Activated CD4-positive, alpha-beta T cell treated with anti-CD3 and anti-CD28 coated beads for 36 hours (primary cell): ENCODE measurements at regions of chr5 and their contacts with region 1.

Region 1: GRCh38 chr5:472656-473553 is 29.9 kb downstream of the EXOC3 start:
- DNase-seq: peak; percentile 93
- ATAC-seq: peak; percentile 80
- H3K4me3 Mint-ChIP-seq: peak overlapping the region; percentile 88
- H3K27ac Mint-ChIP-seq: peak overlapping the region; percentile 93
- H3K4me1 Mint-ChIP-seq: peaks cover 25% of the 10 kb centered on the region
- H3K27me3 Mint-ChIP-seq: peaks cover 4% of the 10 kb centered on the region

Region 2: DNA sequence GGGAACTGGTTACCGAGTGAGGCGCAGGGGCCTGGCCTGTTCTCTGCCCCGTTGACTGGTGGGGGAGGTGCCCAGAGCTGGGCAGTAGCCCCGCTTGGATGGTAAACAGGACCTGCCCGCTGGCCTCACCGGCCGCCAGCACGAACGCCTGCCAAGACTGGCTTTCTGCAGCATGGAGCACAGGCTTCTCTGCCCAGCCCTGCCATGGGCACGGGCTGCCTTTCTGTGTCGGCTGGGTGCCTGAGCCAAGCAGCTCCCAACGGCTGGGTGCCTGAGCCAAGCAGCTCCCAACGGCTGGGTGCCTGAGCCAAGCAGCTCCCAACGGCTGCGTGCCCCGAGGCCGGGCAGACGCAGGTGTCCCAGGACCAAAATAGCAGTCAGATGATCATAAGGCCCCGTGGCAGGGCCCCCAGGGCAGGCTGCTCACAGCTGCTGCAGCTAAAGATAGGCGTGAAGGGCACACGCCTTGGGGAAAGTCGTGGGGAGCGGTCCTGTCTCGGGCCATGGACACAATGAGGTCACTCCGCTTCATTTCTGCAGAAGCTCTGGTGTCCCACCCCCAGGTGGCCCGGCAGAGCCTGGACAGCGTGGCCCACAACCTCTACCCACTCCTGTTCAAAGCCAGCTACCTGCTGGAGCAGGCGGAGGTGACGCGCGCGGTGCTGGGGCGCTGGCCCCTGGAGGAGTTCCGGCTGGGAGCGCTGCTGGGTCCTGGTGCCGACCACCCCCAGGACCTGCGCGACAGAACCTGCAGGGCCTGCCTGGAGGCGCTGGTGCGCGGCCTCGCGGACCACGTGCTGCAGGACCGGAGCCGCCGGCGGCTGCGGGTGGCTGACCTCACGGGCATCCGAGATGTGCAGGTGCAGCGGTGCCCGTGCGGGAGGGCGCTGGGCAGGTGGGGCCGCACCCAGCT is 281.6 kb before region 1 on chr5 and contains the start of gene LRRC14B:
- CTCF ChIA-PET with region 1: no interaction called
- POLR2A ChIA-PET with region 1: no interaction called
- intact Hi-C with region 1: no loop called
- DNase-seq: peak; percentile 51
- ATAC-seq: peak; percentile 12
- H3K4me3 Mint-ChIP-seq: no peak within 1 kb of the TSS
- H3K27ac Mint-ChIP-seq: no peak within 1 kb of the TSS
- H3K4me1 Mint-ChIP-seq: peaks cover 14% of the 10 kb centered on the region
- H3K27me3 Mint-ChIP-seq: peaks cover 3% of the 10 kb centered on the region
- total RNA-seq, gene LRRC14B: 0.11 TPM in 1 of 2 experiments, not detected in the other

Region 3: DNA sequence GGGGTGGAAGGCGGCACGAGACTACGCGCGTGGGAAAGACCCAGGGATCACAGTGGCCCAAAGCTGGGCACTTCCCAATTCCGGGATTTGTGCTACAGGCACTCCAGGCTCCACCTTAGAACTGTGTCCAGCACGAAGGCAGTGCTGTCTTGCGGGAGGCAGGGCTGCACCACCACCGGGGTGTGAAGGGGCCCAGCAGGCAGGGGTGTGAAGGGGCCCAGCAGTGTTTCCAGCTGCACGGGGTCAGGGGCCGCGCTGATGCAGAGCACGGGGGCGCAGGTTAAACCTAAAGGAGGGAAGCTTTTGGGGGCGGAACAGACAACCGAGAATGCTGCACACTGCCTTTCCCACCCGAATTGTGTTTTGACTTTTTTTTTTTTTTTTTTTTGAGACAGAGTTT is 202.6 kb before region 1 on chr5:
- CTCF ChIA-PET with region 1: no interaction called
- POLR2A ChIA-PET with region 1: no interaction called
- intact Hi-C with region 1: loop called in 1 of 2 experiments (anchors 1 kb)
- DNase-seq: no peak
- ATAC-seq: no peak
- H3K4me3 Mint-ChIP-seq: peak overlapping the region; percentile 95
- H3K27ac Mint-ChIP-seq: peak overlapping the region; percentile 47
- H3K4me1 Mint-ChIP-seq: peaks cover 41% of the 10 kb centered on the region
- H3K27me3 Mint-ChIP-seq: no peaks in the 10 kb centered on the region

Region 4: GRCh38 chr5:442335-443238 is 30.3 kb before region 1 on chr5 and contains the start of gene EXOC3:
- CTCF ChIA-PET with region 1: interaction called, 10 read pairs
- POLR2A ChIA-PET with region 1: interaction called, 10 read pairs
- intact Hi-C with region 1: loop called (anchors 1 kb)
- DNase-seq: peak; percentile 83
- ATAC-seq: peak; percentile 88
- H3K4me3 Mint-ChIP-seq: peak within 1 kb of the TSS; percentile 87
- H3K27ac Mint-ChIP-seq: peak within 1 kb of the TSS; percentile 92
- H3K4me1 Mint-ChIP-seq: peaks cover 37% of the 10 kb centered on the region
- H3K27me3 Mint-ChIP-seq: no peaks in the 10 kb centered on the region
- total RNA-seq, gene EXOC3: 49.7 to 62.7 TPM

Region 5: GRCh38 chr5:493119-493701 is 20.3 kb after region 1 on chr5:
- CTCF ChIA-PET with region 1: no interaction called
- POLR2A ChIA-PET with region 1: no interaction called
- intact Hi-C with region 1: no loop called
- DNase-seq: no peak
- ATAC-seq: no peak
- H3K4me3 Mint-ChIP-seq: no peak overlapping the region
- H3K27ac Mint-ChIP-seq: no peak overlapping the region
- H3K4me1 Mint-ChIP-seq: no peaks in the 10 kb centered on the region
- H3K27me3 Mint-ChIP-seq: no peaks in the 10 kb centered on the region

Region 6: DNA sequence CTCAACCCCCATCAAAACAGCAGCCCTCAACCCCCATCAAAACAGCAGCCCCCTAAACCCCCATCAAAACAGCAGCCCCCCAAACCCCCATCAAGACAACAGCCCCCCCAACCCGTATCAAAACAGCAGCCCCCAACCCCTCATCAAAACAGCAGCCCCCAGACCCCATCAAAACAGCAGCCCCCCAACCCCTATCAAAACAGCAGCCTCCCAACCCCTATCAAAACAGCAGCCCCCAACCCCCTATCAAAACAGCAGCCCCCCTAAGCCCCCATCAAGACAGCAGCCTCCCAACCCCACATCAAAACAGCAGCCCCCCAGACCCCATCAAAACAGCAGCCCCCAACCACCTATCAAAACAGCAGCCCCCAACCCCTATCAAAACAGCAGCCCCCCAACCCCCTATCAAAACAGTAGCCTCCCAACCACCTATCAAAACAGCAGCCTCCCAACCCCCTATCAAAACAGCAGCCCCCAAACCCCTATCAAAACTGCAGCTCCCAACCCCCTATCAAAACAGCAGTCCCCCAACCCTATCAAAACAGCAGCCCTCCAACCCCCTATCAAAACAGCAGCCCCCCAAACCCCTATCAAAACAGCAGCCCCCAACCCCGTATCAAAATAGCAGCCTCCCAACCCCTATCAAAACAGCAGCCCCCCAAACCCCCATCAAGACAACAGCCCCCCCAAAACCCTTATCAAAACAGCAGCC is 219.1 kb after region 1 on chr5:
- CTCF ChIA-PET with region 1: no interaction called
- POLR2A ChIA-PET with region 1: no interaction called
- intact Hi-C with region 1: loop called in 1 of 2 experiments (anchors 2 kb)
- DNase-seq: no peak
- ATAC-seq: no peak
- H3K4me3 Mint-ChIP-seq: peak overlapping the region; percentile 19
- H3K27ac Mint-ChIP-seq: no peak overlapping the region
- H3K4me1 Mint-ChIP-seq: no peaks in the 10 kb centered on the region
- H3K27me3 Mint-ChIP-seq: peaks cover 3% of the 10 kb centered on the region

Region 7: DNA sequence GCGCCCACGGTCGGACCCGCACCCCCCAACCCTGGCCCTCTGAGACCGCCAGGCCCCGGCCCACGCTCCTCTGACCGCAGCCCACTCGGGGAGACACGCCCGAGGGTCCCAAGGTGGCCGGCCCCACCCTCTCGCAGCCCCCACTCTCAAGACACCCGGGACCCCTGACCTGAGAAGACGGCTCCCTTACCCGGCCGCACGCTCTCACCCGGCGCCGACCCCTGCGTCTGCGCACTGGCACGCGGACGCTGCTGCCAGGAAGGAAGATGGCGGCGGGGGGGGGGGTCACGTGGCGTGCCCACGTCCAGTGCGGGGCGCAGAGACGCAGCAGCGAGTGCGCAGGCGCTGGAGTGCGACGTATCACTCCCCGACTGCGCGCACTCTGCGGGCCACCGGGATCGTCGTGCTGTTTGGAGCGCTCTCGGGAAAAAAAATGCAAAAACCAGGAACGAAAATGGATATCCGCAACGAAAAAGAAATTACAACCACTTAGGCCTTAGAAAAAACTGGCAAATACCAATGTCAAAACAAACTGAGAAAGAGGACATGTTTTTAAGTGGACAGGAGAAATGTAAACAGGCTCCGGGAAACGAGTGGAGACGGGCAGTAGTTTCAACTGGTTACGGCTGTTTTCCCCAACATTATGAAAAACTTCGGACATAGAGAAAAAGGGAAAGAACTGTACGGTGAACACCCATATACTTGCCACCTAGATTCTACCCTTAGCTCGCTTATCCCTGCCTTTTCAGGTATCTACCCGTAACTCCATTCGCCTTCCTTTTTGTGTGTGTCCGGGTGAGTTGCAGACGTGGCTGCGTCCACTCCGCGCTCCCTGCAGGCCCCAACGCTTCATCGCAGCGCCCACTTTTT is 1326.9 kb after region 1 on chr5 and contains the start of gene MRPL36:
- CTCF ChIA-PET with region 1: no interaction called
- POLR2A ChIA-PET with region 1: no interaction called
- intact Hi-C with region 1: loop called in 1 of 2 experiments (anchors 2 kb)
- DNase-seq: peak; percentile 97
- ATAC-seq: peak; percentile 79
- H3K4me3 Mint-ChIP-seq: peak within 1 kb of the TSS; percentile 94
- H3K27ac Mint-ChIP-seq: peak within 1 kb of the TSS; percentile 97
- H3K4me1 Mint-ChIP-seq: peaks cover 54% of the 10 kb centered on the region
- H3K27me3 Mint-ChIP-seq: no peaks in the 10 kb centered on the region
- total RNA-seq, gene MRPL36: 51.4 to 64.9 TPM